Ovary (tissue), 10 donors: ENCODE measurements at regions of chr17 and their contacts with region 1.

Region 1: DNA sequence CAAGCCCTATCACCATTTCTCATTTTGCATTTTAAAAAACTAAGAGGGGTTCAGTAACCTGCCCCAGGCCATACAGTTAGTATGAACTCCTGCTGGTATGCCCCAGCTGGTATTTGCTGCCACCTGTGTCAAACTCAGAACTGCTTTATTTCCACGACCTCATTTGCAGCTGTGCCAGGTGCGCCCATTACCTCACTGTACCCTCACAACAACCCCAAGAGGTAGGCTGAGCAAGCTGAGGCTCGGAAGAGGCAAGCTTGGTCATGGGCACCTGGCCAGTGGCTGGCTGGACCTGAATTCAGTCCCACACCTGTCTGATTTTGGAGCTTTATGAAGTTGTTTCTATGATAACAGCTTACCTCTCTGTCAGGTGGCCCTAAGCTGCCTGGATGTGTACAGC is 7.6 kb downstream of the EPN2 start:
- DNase-seq: peak in 1 of 5 donors; percentile 7
- H3K4me3 ChIP-seq: no peak overlapping the region
- H3K27ac ChIP-seq: no peak overlapping the region
- H3K4me1 ChIP-seq: peaks cover 18% of the 10 kb centered on the region
- H3K27me3 ChIP-seq: no peaks in the 10 kb centered on the region
- CTCF ChIP-seq: no peak
- EP300 ChIP-seq: no peak
- POLR2A ChIP-seq: no peak

Region 2: DNA sequence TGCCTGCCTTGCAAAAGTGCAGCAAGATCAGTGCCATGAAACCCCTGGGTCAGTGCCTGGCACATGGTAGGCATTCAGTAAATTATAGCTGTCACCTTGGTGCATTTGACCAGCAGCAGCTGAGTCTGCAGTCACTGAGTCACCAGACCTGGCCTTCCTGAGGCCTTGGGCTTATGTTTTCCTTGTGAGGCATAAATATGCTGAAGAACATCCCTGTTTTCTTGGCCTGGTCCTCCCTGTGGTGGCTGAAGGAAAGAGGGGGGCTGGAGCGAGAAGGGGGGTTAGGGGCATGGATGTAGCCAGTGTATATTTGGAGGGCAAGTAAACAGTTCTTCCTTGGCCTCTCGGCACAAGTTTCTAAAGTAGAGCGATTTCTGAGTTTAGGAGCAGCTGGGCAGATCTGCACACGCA is 18.9 kb after region 1 on chr17:
- intact Hi-C with region 1: loop called in 1 of 4 experiments (anchors 2 kb)
- DNase-seq: peak in 1 of 5 donors; percentile 43
- H3K4me3 ChIP-seq: no peak overlapping the region
- H3K27ac ChIP-seq: peak overlapping the region in 1 of 2 donors; percentile 41
- H3K4me1 ChIP-seq: peaks cover 14% of the 10 kb centered on the region
- H3K27me3 ChIP-seq: no peaks in the 10 kb centered on the region
- CTCF ChIP-seq: no peak
- EP300 ChIP-seq: no peak
- POLR2A ChIP-seq: no peak

Region 3: GRCh38 chr17:19288453-19288852 is 43.7 kb after region 1 on chr17:
- intact Hi-C with region 1: no loop called
- DNase-seq: no peak
- H3K4me3 ChIP-seq: no peak overlapping the region
- H3K27ac ChIP-seq: no peak overlapping the region
- H3K4me1 ChIP-seq: peaks cover 20% of the 10 kb centered on the region
- H3K27me3 ChIP-seq: no peaks in the 10 kb centered on the region
- CTCF ChIP-seq: no peak
- EP300 ChIP-seq: no peak
- POLR2A ChIP-seq: no peak

Region 4: DNA sequence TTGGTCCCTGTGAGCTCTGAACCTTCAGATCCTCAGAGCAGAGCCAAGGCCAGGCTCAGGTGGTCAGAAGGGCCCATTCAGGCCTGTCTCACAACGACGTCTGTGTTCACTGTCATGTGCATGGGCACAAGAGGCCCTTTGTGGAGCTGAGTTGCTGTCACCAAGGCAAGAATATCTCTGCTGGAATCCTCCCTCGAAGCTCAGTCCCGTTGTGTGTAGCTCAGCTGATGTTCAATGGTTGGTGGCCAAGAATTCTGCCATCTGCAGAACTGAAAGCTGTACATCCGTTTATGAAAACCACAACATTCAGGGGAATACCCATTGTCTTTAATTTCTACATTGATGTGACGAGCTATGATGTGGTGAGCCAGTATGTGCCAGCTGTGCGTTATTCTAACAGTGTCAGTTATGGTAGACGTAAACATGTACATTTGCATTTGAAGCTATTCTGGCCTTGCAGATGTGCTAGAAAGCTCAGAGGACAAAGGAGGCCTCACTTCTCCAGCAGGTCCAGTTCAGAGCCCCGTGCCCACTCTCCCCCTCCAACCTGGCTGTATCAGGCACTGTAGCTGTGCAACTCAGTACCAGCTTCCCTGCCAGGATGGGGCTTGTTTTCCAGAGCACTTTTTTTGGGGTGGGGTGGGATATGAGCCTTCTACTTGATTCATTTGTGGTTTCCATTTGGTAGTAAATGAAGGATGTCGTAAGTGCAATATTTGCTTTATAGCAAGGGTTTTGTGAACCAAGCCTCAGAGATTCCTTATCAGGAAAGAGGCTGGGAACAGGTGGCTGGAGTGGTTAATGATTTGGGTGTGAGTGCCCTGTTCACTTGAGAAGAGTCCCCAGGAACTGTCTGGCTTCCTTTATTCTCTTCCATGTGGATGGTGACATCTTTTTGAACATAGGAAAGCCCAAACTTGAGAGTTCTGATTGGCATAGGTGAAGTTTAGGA is 61.7 kb after region 1 on chr17:
- intact Hi-C with region 1: no loop called
- DNase-seq: no peak
- H3K4me3 ChIP-seq: no peak overlapping the region
- H3K27ac ChIP-seq: no peak overlapping the region
- H3K4me1 ChIP-seq: no peaks in the 10 kb centered on the region
- H3K27me3 ChIP-seq: no peaks in the 10 kb centered on the region
- CTCF ChIP-seq: no peak
- EP300 ChIP-seq: no peak
- POLR2A ChIP-seq: no peak

Region 5: DNA sequence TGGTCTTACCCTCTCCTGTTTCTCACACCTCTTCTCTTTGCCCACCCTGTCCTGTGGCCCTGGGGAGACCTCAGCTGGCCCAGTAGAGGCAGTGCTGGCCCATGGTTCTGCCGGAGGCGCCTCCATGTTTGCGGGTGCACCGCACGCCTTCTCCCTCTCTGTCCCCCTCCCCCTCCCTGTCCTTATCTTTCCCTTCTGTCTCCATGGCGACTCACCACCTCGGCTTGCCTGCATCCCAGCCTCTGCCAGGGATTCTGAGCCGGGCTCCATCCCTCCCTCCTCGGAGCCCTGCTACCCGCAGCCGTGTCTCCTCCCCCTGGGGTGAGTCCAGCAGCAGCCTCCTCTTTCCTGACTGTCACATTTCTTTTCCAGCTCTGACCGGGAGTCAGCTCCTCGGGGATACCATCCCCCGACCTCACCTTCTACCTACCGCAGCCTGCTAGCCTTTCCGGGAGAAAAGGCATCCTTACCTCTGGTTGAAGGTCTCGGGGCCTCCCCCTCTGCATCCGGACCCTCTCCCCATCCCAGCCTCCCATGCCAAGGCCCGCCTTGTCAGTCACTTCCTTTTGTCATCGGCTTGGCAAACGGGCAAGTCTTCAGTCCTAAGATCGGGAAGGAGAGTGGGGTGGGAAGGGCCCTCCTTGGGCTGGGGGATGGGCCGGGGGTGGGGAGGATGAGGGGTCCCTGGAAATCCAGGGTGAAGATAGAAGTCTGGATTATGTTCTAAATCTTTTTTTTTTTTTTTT is 166.3 kb after region 1 on chr17 and contains the start of gene RNF112:
- intact Hi-C with region 1: no loop called
- DNase-seq: no peak
- H3K4me3 ChIP-seq: no peak within 1 kb of the TSS
- H3K27ac ChIP-seq: no peak within 1 kb of the TSS
- H3K4me1 ChIP-seq: no peaks in the 10 kb centered on the region
- H3K27me3 ChIP-seq: no peaks in the 10 kb centered on the region
- CTCF ChIP-seq: no peak
- EP300 ChIP-seq: no peak
- POLR2A ChIP-seq: no peak
- total RNA-seq, gene RNF112: 0.24 to 6.9 (median 2.1) TPM